ENCODE measurements at regions of chr1 and their contacts with region 1.

Region 1: DNA sequence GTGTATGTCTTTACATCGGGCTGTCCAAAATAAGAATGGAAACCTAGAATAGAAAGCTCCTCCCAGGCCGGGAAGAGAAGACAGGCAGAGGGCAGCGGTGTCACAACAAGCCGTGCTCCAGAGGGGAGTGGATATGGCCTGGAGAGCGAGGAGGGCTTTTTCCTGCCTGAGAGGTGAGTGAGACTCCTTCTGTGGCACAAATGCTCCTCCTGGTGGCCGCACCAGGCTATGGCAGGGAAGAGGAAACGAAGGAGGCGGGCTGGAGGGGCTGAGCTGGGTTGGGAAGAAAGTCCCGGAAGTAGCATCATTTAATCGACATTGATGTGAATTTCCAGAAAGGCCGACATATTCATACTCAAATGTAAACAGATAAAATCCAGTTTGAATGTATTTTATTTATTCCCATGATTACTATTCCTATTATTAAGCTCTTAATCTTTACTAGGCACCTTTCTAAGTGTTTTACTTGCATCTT is 54.7 kb downstream of the MEF2D start:
- H3K4me3 Mint-ChIP-seq: no peak overlapping the region
- H3K27ac Mint-ChIP-seq: no peak overlapping the region
- H3K4me1 Mint-ChIP-seq: peaks cover 8% of the 10 kb centered on the region
- H3K27me3 Mint-ChIP-seq: peaks cover 65% of the 10 kb centered on the region

Region 2: GRCh38 chr1:156126043-156126700 is 319.7 kb before region 1 on chr1:
- intact Hi-C with region 1: no loop called
- H3K4me3 Mint-ChIP-seq: peak overlapping the region; percentile 65
- H3K27ac Mint-ChIP-seq: peak overlapping the region; percentile 95
- H3K4me1 Mint-ChIP-seq: peaks cover 90% of the 10 kb centered on the region
- H3K27me3 Mint-ChIP-seq: peaks cover 10% of the 10 kb centered on the region

Region 3: GRCh38 chr1:156319664-156320063 is 126.2 kb before region 1 on chr1:
- intact Hi-C with region 1: no loop called
- H3K4me3 Mint-ChIP-seq: no peak overlapping the region
- H3K27ac Mint-ChIP-seq: no peak overlapping the region
- H3K4me1 Mint-ChIP-seq: peaks cover 5% of the 10 kb centered on the region
- H3K27me3 Mint-ChIP-seq: no peaks in the 10 kb centered on the region

Region 4: GRCh38 chr1:156385534-156386031 is 60.2 kb before region 1 on chr1:
- intact Hi-C with region 1: loop called (anchors 1 kb)
- H3K4me3 Mint-ChIP-seq: no peak overlapping the region
- H3K27ac Mint-ChIP-seq: no peak overlapping the region
- H3K4me1 Mint-ChIP-seq: peaks cover 32% of the 10 kb centered on the region
- H3K27me3 Mint-ChIP-seq: peaks cover 56% of the 10 kb centered on the region

Measured in dendritic cell treated with granulocyte-macrophage colony-stimulating factor and Interleukin-4, amounts not matched to agents 40 ng/mL and 50 ng/mL, for 4 days (primary cell).